Gastrocnemius medialis (tissue), 4 donors: ENCODE measurements at regions of chr7 and their contacts with region 1.

Region 1: DNA sequence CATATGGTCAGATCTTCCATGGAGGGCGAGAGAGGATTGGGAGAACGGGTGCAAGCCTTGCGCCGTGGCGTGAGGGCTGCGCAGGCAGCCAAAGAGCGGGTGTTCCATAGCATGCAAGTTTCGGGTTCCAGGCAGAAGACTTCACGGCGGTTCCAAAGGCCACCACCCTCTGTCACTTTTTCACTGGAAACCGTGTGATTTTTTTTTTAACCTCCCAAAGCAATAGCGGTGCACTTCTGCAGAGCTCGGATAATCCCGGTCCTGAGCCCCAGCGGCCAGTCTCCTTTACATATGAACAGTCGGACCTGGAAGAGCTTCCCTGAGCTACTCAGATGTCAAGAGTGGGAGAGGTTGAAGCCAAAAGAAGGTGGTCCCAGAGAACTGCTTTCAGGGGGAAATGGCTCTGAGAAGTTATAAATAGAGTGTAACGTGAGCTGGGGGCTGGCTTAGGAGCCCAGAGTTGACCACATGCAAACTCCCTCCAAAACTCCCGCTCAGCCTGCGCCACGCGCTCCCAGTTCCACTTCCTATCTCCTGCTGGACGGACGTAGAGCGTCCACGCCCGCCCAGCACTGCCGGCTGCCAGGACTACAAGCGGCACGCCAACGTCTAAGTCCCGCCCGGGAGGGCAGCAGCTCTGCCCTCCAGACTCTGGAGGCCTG is at the start of gene MEOX2:
- DNase-seq: peak; percentile 55 to 75
- ATAC-seq: peak; percentile 75
- H3K4me3 ChIP-seq: peak within 1 kb of the TSS; percentile 58 to 70 (median 64)
- H3K27ac ChIP-seq: peak within 1 kb of the TSS; percentile 83 to 86 (median 84)
- H3K4me1 ChIP-seq: no peaks in the 10 kb centered on the region
- H3K27me3 ChIP-seq: peaks cover 8 to 46% (median 44%) of the 10 kb centered on the region in 3 donors
- CTCF ChIP-seq: no peak
- POLR2A ChIP-seq: peak; percentile 61 to 84
- total RNA-seq, gene MEOX2: 4.3 to 16.2 (median 7.3) TPM

Region 2: GRCh38 chr7:14875941-14876587 is 810.4 kb before region 1 on chr7:
- in situ Hi-C with region 1: no loop called
- intact Hi-C with region 1: no loop called
- DNase-seq: no peak
- ATAC-seq: no peak
- H3K4me3 ChIP-seq: no peak overlapping the region
- H3K27ac ChIP-seq: no peak overlapping the region
- H3K4me1 ChIP-seq: no peaks in the 10 kb centered on the region
- H3K27me3 ChIP-seq: no peaks in the 10 kb centered on the region
- CTCF ChIP-seq: no peak
- POLR2A ChIP-seq: no peak

Region 3: GRCh38 chr7:15555381-15555859 is 131.0 kb before region 1 on chr7:
- in situ Hi-C with region 1: no loop called
- intact Hi-C with region 1: loop called (anchors 5 kb)
- DNase-seq: no peak
- ATAC-seq: no peak
- H3K4me3 ChIP-seq: no peak overlapping the region
- H3K27ac ChIP-seq: peak overlapping the region in 2 of 4 donors; percentile 21 to 64
- H3K4me1 ChIP-seq: peaks cover 0 to 4% of the 10 kb centered on the region in 2 donors
- H3K27me3 ChIP-seq: no peaks in the 10 kb centered on the region
- CTCF ChIP-seq: peak in 1 of 5 experiments; percentile 18
- POLR2A ChIP-seq: no peak

Region 4: DNA sequence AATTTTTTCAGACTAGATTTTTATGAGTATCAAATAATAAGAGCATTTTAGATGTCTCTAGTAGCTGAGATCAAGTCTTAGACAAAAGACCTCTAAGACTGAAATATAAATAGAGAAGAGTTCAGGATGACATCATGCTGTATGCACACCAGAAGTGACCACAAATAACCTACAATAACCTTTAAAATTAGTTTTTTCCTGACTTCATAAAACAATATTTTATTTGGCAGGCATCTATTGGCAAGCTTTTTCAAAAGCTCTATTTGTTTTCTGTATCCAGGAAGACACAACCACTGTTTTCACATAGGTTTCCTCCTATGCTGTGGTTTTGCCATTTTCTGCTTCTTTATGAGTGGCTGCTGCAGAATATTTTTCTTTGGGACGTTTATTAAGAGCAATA is 375.8 kb after region 1 on chr7:
- in situ Hi-C with region 1: loop called in 3 of 4 experiments (anchors 5 to 25 kb)
- intact Hi-C with region 1: loop called (anchors 2 kb)
- DNase-seq: no peak
- ATAC-seq: peak; percentile 29 to 63
- H3K4me3 ChIP-seq: no peak overlapping the region
- H3K27ac ChIP-seq: peak overlapping the region; percentile 71 to 82 (median 73)
- H3K4me1 ChIP-seq: peaks cover 0 to 16% of the 10 kb centered on the region in 2 donors
- H3K27me3 ChIP-seq: no peaks in the 10 kb centered on the region
- CTCF ChIP-seq: no peak
- POLR2A ChIP-seq: no peak